CD8-positive, alpha-beta T cell (primary cell): ENCODE measurements at regions of chr11 and their contacts with region 1.

Region 1: GRCh38 chr11:76235233-76236091 is 29.2 kb upstream of the WNT11 start:
- DNase-seq: peak; percentile 84 to 96 (median 89)
- ATAC-seq: peak; percentile 84
- H3K4me3 ChIP-seq: peak overlapping the region; percentile 86 to 99
- H3K4me3 Mint-ChIP-seq: peak overlapping the region; percentile 90
- H3K27ac ChIP-seq: peak overlapping the region; percentile 61 to 63
- H3K27ac Mint-ChIP-seq: peak overlapping the region; percentile 89
- H3K4me1 ChIP-seq: peaks cover 47% of the 10 kb centered on the region
- H3K4me1 Mint-ChIP-seq: peaks cover 39% of the 10 kb centered on the region
- H3K27me3 ChIP-seq: no peaks in the 10 kb centered on the region
- H3K27me3 Mint-ChIP-seq: no peaks in the 10 kb centered on the region
- CTCF ChIP-seq: no peak

Region 2: DNA sequence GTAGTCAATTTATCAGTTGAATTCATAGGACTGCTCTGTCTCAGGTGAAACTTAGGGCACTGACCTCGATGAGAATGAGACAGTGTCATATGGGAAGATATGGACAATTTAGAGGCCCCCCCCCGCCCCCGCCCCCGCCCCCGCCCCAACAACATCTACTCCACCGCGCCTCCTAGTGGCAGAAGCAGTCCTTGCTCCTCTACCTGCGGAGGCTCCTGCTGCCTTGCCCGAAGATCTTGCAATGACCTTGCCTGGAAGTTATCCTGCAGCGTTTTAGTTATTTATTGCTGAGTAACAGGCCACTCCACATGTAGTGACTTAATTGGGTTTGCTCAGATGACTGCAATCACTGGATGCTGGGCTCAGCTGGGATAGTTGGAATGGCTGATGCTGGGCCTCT is 658.3 kb before region 1 on chr11:
- CTCF ChIA-PET with region 1: no interaction called
- POLR2A ChIA-PET with region 1: no interaction called
- intact Hi-C with region 1: loop called in 1 of 2 experiments (anchors 10 kb)
- DNase-seq: peak; percentile 33 to 74 (median 67)
- ATAC-seq: peak; percentile 77
- H3K4me3 ChIP-seq: no peak overlapping the region
- H3K4me3 Mint-ChIP-seq: no peak overlapping the region
- H3K27ac ChIP-seq: no peak overlapping the region
- H3K27ac Mint-ChIP-seq: no peak overlapping the region
- H3K4me1 ChIP-seq: peaks cover 6% of the 10 kb centered on the region
- H3K4me1 Mint-ChIP-seq: peaks cover 7% of the 10 kb centered on the region
- H3K27me3 ChIP-seq: no peaks in the 10 kb centered on the region
- H3K27me3 Mint-ChIP-seq: no peaks in the 10 kb centered on the region
- CTCF ChIP-seq: peak; percentile 65

Region 3: DNA sequence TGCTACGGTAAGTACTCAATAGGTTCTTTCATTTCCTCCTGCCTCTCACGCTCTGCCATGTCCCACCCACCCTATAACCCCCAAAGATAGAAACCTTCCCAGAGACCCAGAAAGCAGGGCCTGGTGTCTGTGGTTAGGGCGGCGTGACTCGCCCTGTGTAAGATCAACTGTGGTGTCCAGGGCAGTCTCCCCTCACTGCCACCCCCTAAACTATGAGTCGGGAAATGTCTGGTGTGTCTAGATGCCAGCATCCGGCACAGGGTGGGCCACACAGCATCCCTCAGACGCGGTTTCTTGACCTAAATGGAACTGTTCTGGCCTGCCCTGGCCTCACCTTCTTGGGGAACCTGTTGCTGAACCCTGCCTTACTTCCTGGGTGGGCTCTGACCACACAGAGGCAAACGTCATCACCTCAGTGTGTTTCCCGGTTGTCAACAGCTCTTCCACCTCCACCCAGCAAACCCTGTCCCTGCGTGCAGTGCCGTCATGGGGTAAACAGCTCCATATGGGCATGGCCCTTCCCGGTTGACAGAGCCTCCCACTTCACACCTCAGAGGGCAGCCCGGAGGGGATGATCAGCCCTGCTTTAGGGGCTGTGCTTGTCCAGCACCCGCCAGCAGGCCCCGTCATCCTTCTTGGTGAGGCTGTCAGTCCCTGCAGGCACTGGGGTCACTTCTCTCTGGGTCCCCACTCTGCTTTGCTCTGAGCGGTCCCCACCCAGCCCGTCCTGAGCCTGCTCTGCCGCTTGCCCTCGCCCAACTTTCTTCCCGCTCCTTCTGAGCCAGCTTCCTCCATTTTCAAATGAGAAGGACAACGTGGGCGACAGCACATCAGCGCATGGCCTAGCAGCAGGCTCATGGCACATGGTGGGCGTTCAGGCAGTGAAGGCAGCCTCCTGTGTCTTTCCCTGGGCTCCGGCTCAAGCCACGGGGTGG is 35.2 kb before region 1 on chr11:
- CTCF ChIA-PET with region 1: no interaction called
- POLR2A ChIA-PET with region 1: no interaction called
- intact Hi-C with region 1: no loop called
- DNase-seq: peak in 3 of 9 experiments; percentile 47 to 53 (median 49)
- ATAC-seq: peak; percentile 68
- H3K4me3 ChIP-seq: no peak overlapping the region
- H3K4me3 Mint-ChIP-seq: no peak overlapping the region
- H3K27ac ChIP-seq: no peak overlapping the region
- H3K27ac Mint-ChIP-seq: peak overlapping the region; percentile 60
- H3K4me1 ChIP-seq: no peaks in the 10 kb centered on the region
- H3K4me1 Mint-ChIP-seq: no peaks in the 10 kb centered on the region
- H3K27me3 ChIP-seq: peaks cover 5 to 6% of the 10 kb centered on the region in 2 experiments
- H3K27me3 Mint-ChIP-seq: peaks cover 17% of the 10 kb centered on the region
- CTCF ChIP-seq: no peak

Region 4: GRCh38 chr11:76293189-76293631 is 57.7 kb after region 1 on chr11:
- CTCF ChIA-PET with region 1: interaction called, 4 read pairs
- POLR2A ChIA-PET with region 1: interaction called, 5 read pairs
- intact Hi-C with region 1: loop called in 1 of 2 experiments (anchors 2 kb)
- DNase-seq: no peak
- ATAC-seq: peak; percentile 36
- H3K4me3 ChIP-seq: no peak overlapping the region
- H3K4me3 Mint-ChIP-seq: peak overlapping the region; percentile 47
- H3K27ac ChIP-seq: no peak overlapping the region
- H3K27ac Mint-ChIP-seq: peak overlapping the region; percentile 79
- H3K4me1 ChIP-seq: peaks cover 22% of the 10 kb centered on the region
- H3K4me1 Mint-ChIP-seq: peaks cover 25% of the 10 kb centered on the region
- H3K27me3 ChIP-seq: no peaks in the 10 kb centered on the region
- H3K27me3 Mint-ChIP-seq: no peaks in the 10 kb centered on the region
- CTCF ChIP-seq: no peak

Region 5: DNA sequence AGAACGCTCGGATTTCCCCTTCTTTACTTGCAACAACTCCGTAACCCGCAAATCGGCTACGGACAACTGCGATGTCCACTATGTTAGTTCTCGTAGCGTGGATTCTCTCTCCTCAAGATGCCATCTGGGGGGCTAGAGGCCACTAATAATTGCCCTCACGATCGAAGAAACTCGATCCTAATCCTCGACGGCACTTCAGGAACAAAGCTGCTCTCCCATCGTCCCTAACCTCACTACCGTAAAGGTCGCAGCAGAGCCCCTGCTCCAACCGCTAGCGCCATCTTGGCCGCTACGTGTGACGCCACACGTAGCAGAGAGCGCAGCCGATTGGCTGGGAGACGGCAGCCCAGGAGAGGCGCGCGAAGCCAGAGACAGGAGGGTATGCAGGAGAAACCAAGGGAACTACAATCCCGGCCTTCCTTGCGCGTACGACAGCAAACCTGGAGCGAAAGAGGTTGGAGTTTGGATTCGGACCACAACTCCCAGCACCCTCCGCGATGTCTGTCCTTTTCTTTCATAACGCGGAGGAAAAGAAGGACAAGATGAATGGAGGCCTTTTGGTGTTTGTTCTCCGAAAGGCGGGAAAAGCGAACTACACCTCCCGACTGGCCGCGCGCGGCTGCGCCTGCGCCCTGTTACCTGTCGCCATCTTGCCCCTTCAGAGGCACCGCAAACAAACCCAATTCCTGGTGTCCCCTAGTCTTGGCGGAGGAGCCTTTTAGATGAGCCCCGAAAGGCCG is 209.1 kb after region 1 on chr11 and contains the start of gene EMSY:
- CTCF ChIA-PET with region 1: no interaction called
- POLR2A ChIA-PET with region 1: no interaction called
- intact Hi-C with region 1: loop called (anchors 1 kb)
- DNase-seq: peak; percentile 77 to 97 (median 90)
- ATAC-seq: peak; percentile 91
- H3K4me3 ChIP-seq: peak within 1 kb of the TSS; percentile 58 to 100
- H3K4me3 Mint-ChIP-seq: peak within 1 kb of the TSS; percentile 94
- H3K27ac ChIP-seq: peak within 1 kb of the TSS; percentile 70 to 97
- H3K27ac Mint-ChIP-seq: peak within 1 kb of the TSS; percentile 96
- H3K4me1 ChIP-seq: peaks cover 20% of the 10 kb centered on the region
- H3K4me1 Mint-ChIP-seq: peaks cover 38% of the 10 kb centered on the region
- H3K27me3 ChIP-seq: no peaks in the 10 kb centered on the region
- H3K27me3 Mint-ChIP-seq: no peaks in the 10 kb centered on the region
- CTCF ChIP-seq: no peak
- total RNA-seq, gene EMSY: 19.8 to 20.7 TPM